Breast epithelium (tissue), 4 donors: ENCODE measurements at regions of chr4 and their contacts with region 1.

Region 1: DNA sequence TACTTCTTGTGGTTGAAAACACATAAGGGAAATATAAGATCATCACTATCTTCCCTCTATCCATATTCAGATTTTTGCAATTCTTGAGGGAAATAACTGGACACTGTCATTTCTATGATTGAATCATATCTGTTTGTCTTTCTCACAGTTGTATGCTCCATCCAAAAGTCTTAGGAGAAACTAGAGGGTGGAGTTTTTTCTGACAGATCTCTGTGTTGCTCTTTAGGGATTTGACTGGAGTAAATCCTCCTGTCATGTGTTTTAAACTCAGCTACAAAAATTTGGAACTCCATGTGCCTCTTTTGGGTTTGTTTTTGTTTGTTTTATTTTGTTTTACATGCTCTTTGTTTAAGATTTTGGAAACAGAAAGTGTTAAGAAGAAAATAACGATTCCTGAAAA is 136.5 kb downstream of the SPATA18 start:
- DNase-seq: no peak
- H3K4me3 ChIP-seq: no peak overlapping the region
- H3K27ac ChIP-seq: no peak overlapping the region
- H3K4me1 ChIP-seq: no peaks in the 10 kb centered on the region
- H3K27me3 ChIP-seq: no peaks in the 10 kb centered on the region
- CTCF ChIP-seq: no peak
- POLR2A ChIP-seq: no peak

Region 2: DNA sequence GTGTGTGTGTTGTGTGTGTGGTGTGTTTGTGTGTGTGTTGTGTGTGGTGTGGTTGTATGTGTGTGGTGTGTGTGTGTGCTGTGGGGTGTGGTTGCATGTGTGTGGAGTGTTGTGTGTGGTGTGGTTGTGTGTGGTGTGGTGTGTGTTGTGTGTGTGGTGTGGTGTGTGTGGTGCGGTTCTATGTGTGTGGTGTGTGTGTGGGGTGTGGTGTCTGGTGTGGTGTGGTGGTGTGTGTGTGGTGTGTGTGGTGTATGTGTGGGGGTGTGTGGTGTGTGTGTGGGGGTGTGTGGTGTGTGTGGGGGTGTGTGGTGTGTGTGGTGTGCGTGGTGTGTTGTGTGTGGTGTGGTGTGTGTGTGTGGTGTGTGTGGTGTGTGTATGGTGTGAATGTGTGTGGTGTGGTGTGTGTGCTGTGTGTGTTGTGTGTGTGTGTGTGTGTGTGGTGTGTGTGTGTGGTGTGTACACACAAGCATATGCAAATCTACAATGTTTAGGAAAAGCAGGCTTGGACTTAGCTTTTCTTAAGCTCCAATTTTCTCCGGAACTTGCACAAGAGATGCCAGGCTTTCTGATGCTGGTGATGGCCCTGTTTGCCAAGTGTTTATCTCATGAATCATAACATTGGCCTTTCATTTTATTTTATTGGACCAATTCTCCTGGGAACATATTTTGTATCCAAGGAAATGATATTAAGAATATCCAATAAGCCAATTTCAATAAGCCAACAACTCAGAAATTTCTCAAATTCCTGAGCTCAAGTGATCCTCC is 12.2 kb after region 1 on chr4:
- intact Hi-C with region 1: no loop called
- DNase-seq: no peak
- H3K4me3 ChIP-seq: no peak overlapping the region
- H3K27ac ChIP-seq: no peak overlapping the region
- H3K4me1 ChIP-seq: no peaks in the 10 kb centered on the region
- H3K27me3 ChIP-seq: no peaks in the 10 kb centered on the region
- CTCF ChIP-seq: no peak
- POLR2A ChIP-seq: no peak

Region 3: DNA sequence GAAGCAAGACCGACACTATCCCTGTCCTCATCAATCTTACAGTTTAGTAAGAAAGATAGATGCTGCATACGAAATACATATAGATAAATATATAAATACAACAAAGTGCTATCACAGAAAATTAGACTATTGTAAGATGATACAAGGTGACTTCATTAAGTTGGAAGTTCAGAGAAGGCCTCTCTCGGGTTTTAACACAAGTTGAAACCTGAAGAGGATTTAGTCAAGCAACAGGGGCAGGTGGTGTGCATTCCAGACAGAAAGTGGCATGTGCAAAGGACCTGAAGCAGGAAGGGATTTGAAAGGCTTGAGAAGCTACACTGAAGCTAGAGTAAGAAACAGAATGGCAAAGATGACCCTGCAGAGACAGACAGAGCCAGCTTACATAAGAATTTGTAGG is 435.0 kb after region 1 on chr4:
- intact Hi-C with region 1: loop called (anchors 5 kb)
- DNase-seq: no peak
- H3K4me3 ChIP-seq: no peak overlapping the region
- H3K27ac ChIP-seq: no peak overlapping the region
- H3K4me1 ChIP-seq: no peaks in the 10 kb centered on the region
- H3K27me3 ChIP-seq: no peaks in the 10 kb centered on the region
- CTCF ChIP-seq: no peak
- POLR2A ChIP-seq: no peak